ENCODE measurements at regions of chr12 and their contacts with region 1.

Region 1: DNA sequence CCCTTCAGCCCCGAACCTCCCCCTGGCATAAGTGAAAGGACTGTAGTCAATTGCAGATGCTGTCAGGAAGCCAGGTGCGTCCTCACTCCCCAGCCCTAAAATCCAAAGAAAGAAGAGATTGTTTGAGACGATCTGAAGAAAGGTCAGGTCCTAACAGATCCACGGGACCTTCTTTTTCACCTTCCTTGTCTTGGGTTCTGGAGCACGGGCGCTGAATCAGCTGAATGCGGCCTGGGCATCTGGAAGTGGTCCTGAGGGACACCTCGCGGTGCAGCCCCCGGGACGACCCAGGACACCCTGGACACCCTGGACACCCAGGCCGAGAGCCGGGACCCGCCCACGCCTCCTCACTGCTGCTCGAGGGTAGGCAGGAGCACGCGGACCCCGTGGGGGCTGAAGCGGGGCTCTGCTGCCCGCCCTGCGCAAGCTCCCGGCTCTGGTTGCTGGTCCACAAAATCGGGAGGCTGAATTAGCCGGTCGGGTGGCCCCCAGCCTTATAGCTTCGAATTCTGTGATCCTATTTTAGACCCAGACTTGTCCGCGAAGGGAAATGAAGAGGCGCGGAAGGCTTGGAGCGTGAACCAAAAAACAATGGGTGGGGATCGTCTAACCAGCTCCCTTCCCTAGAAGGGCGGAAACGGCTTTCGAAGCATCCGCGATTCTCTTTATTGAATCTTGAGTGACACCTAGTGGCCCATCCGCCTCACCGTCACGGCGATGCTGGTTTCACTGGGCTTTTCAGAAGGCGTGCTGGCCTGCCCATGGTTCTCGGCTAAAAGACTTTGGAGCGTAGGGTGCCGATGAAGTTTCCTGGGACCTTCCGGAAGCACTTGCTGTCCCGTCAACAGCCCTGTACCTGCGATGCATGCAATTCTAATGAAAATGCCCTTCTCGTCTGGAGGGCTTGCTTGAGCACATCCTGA is 46.4 kb upstream of the PLXNC1 start:
- H3K4me3 ChIP-seq: peak overlapping the region; percentile 42
- H3K27ac ChIP-seq: peak overlapping the region; percentile 60; the same call in 1 of the 2 replicates
- H3K4me1 ChIP-seq: no peaks in the 10 kb centered on the region
- CTCF ChIP-seq: peak; percentile 85

Region 2: GRCh38 chr12:92987362-92987761 is 1114.6 kb before region 1 on chr12:
- CTCF ChIA-PET with region 1: interaction called, 20 read pairs
- POLR2A ChIA-PET with region 1: no interaction called
- H3K4me3 ChIP-seq: no peak overlapping the region
- H3K27ac ChIP-seq: no peak overlapping the region
- H3K4me1 ChIP-seq: no peaks in the 10 kb centered on the region; the same call in 1 of the 2 replicates
- CTCF ChIP-seq: peak; percentile 54; the same call in 1 of the 2 replicates

Region 3: GRCh38 chr12:93509482-93509881 is 592.5 kb before region 1 on chr12:
- CTCF ChIA-PET with region 1: interaction called, 127 read pairs
- POLR2A ChIA-PET with region 1: interaction called, 3 read pairs
- H3K4me3 ChIP-seq: no peak overlapping the region
- H3K27ac ChIP-seq: no peak overlapping the region
- H3K4me1 ChIP-seq: no peaks in the 10 kb centered on the region
- CTCF ChIP-seq: no peak

Region 4: GRCh38 chr12:93699271-93700145 is 402.5 kb before region 1 on chr12:
- CTCF ChIA-PET with region 1: interaction called, 11 read pairs
- POLR2A ChIA-PET with region 1: no interaction called
- H3K4me3 ChIP-seq: no peak overlapping the region
- H3K27ac ChIP-seq: 0 out of 2 replicates have a peak overlapping the region, but pooled peaks have one; percentile 25
- H3K4me1 ChIP-seq: peaks cover 16% of the 10 kb centered on the region
- CTCF ChIP-seq: no peak

Region 5: DNA sequence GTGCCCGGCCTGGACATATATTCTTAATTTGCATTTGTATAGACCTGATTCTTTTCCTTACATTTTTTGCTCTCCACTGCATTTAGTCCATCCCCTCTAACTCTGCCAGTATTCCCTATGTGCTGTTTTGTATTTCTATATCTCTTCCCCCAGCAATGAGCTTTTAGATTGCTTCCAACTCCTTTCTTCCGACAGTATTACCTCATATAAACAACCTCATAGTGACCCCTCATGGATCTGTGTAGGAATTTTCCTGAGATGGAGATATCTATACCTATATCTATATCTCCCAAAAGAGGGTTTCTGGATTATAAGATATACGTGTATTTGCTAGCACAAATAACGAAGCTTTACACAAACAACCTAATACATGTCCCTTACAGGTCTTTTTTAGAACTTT is 262.9 kb before region 1 on chr12:
- CTCF ChIA-PET with region 1: interaction called, 15 read pairs
- POLR2A ChIA-PET with region 1: no interaction called
- H3K4me3 ChIP-seq: no peak overlapping the region
- H3K27ac ChIP-seq: no peak overlapping the region
- H3K4me1 ChIP-seq: no peaks in the 10 kb centered on the region
- CTCF ChIP-seq: no peak

Region 6: DNA sequence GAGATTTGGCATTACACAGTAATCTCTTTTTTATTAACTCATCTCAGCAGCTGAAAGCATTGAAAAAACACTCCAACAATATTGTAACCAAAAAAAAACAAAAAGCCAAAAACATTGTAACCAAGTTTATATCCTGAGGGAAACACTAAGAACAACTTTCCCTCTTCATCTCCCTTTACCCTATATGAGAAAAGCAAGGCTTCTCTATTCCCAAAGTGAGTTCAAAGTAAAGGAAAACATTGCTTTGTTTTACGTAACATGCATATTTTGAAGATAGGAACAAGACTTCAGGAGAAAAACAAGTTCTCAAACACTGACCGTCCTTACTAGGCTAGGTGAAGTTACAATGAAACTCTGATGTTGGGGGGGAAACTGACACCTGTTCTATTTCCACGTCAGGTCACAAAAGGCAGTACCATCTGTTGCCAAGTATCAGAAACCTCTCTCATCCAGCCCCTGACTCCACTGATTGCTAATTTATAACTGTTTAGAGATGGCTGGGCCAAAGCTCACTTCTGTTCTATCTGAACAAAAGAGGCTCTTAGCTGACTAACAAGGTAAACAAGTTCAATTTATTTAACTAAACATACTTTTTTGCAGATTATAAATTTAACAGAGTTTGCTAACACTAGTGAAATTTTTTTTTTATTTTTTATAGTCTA is 21.5 kb before region 1 on chr12:
- CTCF ChIA-PET with region 1: interaction called, 55 read pairs
- POLR2A ChIA-PET with region 1: no interaction called
- H3K4me3 ChIP-seq: no peak overlapping the region
- H3K27ac ChIP-seq: no peak overlapping the region
- H3K4me1 ChIP-seq: no peaks in the 10 kb centered on the region
- CTCF ChIP-seq: no peak

Region 7: GRCh38 chr12:94165163-94165562 is 63.2 kb after region 1 on chr12:
- CTCF ChIA-PET with region 1: no interaction called
- POLR2A ChIA-PET with region 1: no interaction called
- H3K4me3 ChIP-seq: no peak overlapping the region
- H3K27ac ChIP-seq: no peak overlapping the region
- H3K4me1 ChIP-seq: no peaks in the 10 kb centered on the region
- CTCF ChIP-seq: no peak

Region 8: GRCh38 chr12:94305130-94305957 is 203.3 kb after region 1 on chr12:
- CTCF ChIA-PET with region 1: no interaction called
- POLR2A ChIA-PET with region 1: no interaction called
- H3K4me3 ChIP-seq: no peak overlapping the region
- H3K27ac ChIP-seq: no peak overlapping the region
- H3K4me1 ChIP-seq: no peaks in the 10 kb centered on the region
- CTCF ChIP-seq: no peak

Region 9: DNA sequence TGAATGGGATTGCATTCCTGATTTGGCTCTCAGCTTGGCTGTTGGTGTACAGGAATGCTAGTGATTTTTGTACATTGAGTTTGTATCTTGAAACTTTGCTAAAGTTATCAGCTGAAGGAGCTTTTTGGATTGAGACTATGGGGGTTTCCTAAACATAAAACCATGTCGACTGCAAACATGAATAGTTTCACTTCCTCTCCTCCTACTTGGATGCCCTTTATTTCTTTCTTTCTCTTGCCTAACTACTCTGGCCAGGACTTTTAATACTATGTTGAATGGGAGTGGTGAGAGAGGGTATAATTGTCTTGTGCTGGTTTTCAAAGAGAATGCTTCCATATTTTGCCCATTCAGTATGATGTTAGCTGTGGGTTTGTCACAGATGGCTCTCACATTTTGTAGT is 216.2 kb after region 1 on chr12:
- CTCF ChIA-PET with region 1: no interaction called
- POLR2A ChIA-PET with region 1: no interaction called
- H3K4me3 ChIP-seq: no peak overlapping the region
- H3K27ac ChIP-seq: no peak overlapping the region
- H3K4me1 ChIP-seq: no peaks in the 10 kb centered on the region
- CTCF ChIP-seq: no peak